ENCODE measurements at regions of chr4 and their contacts with region 1.

Region 1: GRCh38 chr4:55554453-55555030 is 7.8 kb upstream of the CLOCK start:
- DNase-seq: no peak
- H3K4me3 Mint-ChIP-seq: no peak overlapping the region
- H3K27ac Mint-ChIP-seq: no peak overlapping the region
- H3K4me1 Mint-ChIP-seq: peaks cover 10% of the 10 kb centered on the region
- H3K27me3 Mint-ChIP-seq: peaks cover 39% of the 10 kb centered on the region

Region 2: GRCh38 chr4:55312489-55313101 is 241.9 kb before region 1 on chr4:
- intact Hi-C with region 1: loop called (anchors 1 kb)
- DNase-seq: peak; percentile 10
- H3K4me3 Mint-ChIP-seq: no peak overlapping the region
- H3K27ac Mint-ChIP-seq: no peak overlapping the region
- H3K4me1 Mint-ChIP-seq: peaks cover 9% of the 10 kb centered on the region
- H3K27me3 Mint-ChIP-seq: peaks cover 4% of the 10 kb centered on the region

Region 3: DNA sequence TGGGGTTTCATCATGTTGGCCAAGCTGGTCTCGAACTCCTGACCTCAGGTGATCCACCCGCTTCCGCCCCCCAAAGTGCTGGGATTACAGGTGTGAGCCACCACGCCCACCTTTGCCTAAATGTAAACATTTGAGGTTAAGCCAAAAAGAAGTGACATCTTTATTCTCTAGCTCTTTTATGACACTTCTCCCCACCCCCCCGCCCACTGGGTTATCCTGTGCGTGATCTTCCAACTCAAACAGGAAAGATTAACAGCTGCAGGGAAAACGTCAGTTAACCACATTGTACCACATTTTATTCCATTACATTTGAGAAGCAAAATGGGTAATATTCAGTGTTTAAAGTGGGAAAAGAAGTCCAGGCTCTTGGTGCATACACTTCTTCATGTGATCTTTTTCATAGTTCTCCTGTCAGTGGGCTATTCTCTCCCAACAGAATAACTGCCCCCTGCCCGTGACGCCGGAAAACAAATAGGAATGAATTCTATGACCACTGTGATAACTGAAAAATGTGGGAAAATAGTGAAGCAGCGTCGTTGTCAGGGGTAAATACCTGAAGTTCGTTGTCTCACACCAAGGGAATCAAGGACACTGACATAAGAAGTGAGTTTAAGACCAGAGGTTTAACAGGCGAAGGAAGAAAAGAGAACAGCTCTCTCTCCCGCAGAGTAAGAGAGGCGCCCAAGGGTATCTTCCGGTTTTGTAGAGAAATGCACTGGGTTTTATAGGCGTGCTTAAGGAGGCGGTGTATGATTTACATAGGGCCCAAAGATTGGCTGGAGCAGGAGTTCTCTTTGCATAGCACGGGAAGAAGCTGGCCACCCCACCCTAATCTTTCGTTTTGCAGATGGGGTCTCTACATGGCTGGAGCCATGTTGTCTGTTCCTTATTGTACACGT is 218.2 kb before region 1 on chr4:
- intact Hi-C with region 1: loop called (anchors 5 kb)
- DNase-seq: no peak
- H3K4me3 Mint-ChIP-seq: no peak overlapping the region
- H3K27ac Mint-ChIP-seq: peak overlapping the region; percentile 80
- H3K4me1 Mint-ChIP-seq: peaks cover 19% of the 10 kb centered on the region
- H3K27me3 Mint-ChIP-seq: no peaks in the 10 kb centered on the region

Measured in activated T-helper 2 cell treated with anti-CD3 and anti-CD28 coated beads, Interferon-gamma antibody, Interleukin-2, Interleukin-4, amounts not matched to agents 10 μg/mL and 5 μg/mL and 100 μg/mL, durations not matched to agents 14 hours and 24 hours and 36 hours (primary cell).